ENCODE measurements at regions of chr7 and their contacts with region 1.

Region 1: GRCh38 chr7:118324790-118325449 is 100.4 kb downstream of the ANKRD7 start:
- DNase-seq: no peak
- H3K4me3 ChIP-seq: no peak overlapping the region
- H3K27ac ChIP-seq: no peak overlapping the region
- H3K4me1 ChIP-seq: no peaks in the 10 kb centered on the region
- H3K27me3 ChIP-seq: no peaks in the 10 kb centered on the region
- CTCF ChIP-seq: no peak
- EP300 ChIP-seq: no peak
- POLR2A ChIP-seq: no peak

Region 2: DNA sequence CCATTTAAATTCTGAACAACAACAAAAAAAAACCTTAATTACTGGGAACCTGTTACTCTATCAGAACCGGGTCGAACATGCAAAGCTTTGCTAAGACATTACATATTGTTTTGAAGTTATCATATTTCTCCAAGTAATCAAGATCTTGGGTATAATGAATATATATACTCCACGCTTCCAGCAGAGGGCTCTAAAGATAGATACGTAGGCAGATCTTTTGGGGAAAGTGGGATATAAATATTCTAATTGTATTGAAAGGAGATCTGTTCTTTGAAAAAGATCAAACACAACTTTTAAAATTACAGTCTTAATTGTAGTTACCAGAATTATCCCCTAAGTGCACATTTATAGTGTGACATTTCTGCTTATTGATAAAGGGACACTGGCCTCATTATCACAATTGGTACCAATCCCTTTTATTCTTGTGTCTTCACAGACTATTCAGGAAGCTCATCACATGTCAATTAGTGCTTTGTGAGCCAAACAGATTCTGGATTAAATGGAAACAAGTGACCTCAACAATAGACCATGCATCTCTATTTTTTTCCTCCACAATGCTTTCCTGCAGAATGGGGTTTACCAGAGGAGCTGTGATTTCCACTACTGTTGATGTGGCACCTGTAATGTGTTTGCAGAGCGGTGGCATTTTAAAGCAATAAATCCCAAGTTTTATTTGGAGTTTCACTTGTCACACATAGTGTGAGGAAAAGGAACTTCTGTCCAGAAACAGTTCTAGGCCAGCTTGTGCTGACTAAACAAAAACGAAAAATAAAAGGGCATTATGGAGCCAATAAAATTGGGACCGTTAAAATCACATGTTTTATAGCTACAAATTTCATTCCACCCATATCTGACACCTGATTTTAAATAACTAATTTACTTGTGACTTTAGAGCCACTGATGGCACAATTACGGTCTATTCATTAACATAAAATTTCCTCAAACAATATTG is 574.0 kb before region 1 on chr7:
- in situ Hi-C with region 1: no loop called
- intact Hi-C with region 1: no loop called
- DNase-seq: no peak
- H3K4me3 ChIP-seq: no peak overlapping the region
- H3K27ac ChIP-seq: no peak overlapping the region
- H3K4me1 ChIP-seq: no peaks in the 10 kb centered on the region
- H3K27me3 ChIP-seq: no peaks in the 10 kb centered on the region
- CTCF ChIP-seq: peak; percentile 43 to 61 (median 52)
- EP300 ChIP-seq: no peak
- POLR2A ChIP-seq: no peak

Region 3: DNA sequence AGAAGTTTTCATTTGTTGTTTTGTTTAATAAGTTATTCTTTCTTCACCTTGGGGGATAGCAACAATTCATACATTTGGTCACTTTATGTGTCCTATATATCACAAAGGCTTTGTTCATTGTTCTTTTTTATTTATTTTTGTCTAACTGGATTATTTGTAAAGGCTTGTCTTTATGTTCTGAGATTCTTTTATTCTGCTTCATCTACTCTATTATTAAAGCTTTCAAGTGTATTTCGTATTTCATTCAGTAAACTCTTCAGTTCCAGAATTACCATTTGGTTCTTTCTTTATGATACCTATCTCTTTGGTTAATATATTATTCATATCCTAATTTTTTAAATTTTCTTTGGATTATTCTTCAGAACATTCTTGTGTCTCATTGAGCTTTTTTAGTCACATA is 842.5 kb after region 1 on chr7:
- in situ Hi-C with region 1: loop called in 1 of 4 experiments (anchors 25 kb)
- intact Hi-C with region 1: no loop called
- DNase-seq: no peak
- H3K4me3 ChIP-seq: no peak overlapping the region
- H3K27ac ChIP-seq: no peak overlapping the region
- H3K4me1 ChIP-seq: no peaks in the 10 kb centered on the region
- H3K27me3 ChIP-seq: no peaks in the 10 kb centered on the region
- CTCF ChIP-seq: no peak
- EP300 ChIP-seq: no peak
- POLR2A ChIP-seq: no peak

Measured in transverse colon (tissue), 4 donors.